HCT116 (cell line): ENCODE measurements at regions of chr16 and their contacts with region 1.

Region 1: DNA sequence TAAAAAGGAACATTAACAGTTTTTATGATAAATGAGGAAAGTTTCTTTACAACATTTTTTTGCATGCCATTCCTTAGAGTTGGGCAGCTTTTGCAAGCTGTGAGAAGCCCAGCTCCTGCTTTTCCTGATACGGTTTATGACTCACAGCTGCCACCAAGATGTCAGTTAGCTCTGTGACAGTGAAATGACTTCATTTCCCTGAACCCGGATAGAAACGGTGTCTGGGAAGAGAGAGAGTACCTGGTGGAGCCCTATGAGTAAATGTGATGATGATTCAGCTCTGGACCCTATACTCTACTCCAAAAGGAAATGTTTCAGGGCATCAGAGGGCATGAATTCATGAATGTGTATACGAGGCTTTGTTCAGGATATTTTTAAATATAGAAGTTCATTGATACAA is 366.3 kb upstream of the HSBP1 start:
- DNase-seq: no peak
- ATAC-seq: no peak
- H3K4me3 ChIP-seq: no peak overlapping the region
- H3K27ac ChIP-seq: no peak overlapping the region
- H3K4me1 ChIP-seq: no peaks in the 10 kb centered on the region
- H3K27me3 ChIP-seq: no peaks in the 10 kb centered on the region
- CTCF ChIP-seq: no peak
- POLR2A ChIP-seq: no peak
- RAD21 ChIP-seq: no peak

Region 2: DNA sequence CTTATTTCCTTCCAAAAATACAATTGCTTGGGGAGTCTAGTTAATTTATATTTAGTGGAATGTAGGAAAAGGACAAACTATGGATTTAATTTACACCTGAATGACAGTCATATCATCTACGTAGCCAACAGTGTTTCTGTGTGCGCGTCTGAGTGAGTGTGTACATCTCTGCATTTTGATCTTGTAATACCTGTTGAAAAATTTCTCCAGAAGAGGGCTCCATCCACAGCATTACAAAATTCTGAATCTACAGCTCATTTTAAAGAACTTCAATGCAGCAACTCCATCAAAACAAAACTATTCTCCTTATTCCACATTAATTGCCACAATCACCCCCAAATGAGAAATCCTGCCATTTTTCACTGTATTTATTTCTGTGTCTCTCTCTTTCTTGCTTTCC is 810.8 kb before region 1 on chr16:
- CTCF ChIA-PET with region 1: interaction called, 10 read pairs
- POLR2A ChIA-PET with region 1: no interaction called
- RAD21 ChIA-PET with region 1: no interaction called
- intact Hi-C with region 1: loop called (anchors 10 kb)
- DNase-seq: no peak
- ATAC-seq: no peak
- H3K4me3 ChIP-seq: no peak overlapping the region
- H3K27ac ChIP-seq: no peak overlapping the region
- H3K4me1 ChIP-seq: peaks cover 7 to 15% of the 10 kb centered on the region in 2 experiments; a peak in 3 of 4 replicates
- H3K27me3 ChIP-seq: 0 out of 2 replicates have a peak, but pooled peaks cover 9% of the 10 kb centered on the region
- CTCF ChIP-seq: peak in 1 of 3 experiments; percentile 29; a peak in 2 of 6 replicates
- POLR2A ChIP-seq: no peak
- RAD21 ChIP-seq: peak; percentile 45; the same call in 1 of the 2 replicates